ENCODE measurements at regions of chr10 and their contacts with region 1.

Region 1: GRCh38 chr10:103192451-103193106 is 493 bp downstream of the NT5C2 start:
- DNase-seq: peak; percentile 61 to 84
- ATAC-seq: peak; percentile 65 to 69
- H3K4me3 ChIP-seq: peak overlapping the region; percentile 80 to 99 (median 89)
- H3K27ac ChIP-seq: peak overlapping the region; percentile 96 to 99 (median 98)
- H3K4me1 ChIP-seq: peaks cover 63 to 65% of the 10 kb centered on the region in 2 donors
- H3K27me3 ChIP-seq: no peaks in the 10 kb centered on the region
- CTCF ChIP-seq: no peak
- POLR2A ChIP-seq: no peak

Region 2: DNA sequence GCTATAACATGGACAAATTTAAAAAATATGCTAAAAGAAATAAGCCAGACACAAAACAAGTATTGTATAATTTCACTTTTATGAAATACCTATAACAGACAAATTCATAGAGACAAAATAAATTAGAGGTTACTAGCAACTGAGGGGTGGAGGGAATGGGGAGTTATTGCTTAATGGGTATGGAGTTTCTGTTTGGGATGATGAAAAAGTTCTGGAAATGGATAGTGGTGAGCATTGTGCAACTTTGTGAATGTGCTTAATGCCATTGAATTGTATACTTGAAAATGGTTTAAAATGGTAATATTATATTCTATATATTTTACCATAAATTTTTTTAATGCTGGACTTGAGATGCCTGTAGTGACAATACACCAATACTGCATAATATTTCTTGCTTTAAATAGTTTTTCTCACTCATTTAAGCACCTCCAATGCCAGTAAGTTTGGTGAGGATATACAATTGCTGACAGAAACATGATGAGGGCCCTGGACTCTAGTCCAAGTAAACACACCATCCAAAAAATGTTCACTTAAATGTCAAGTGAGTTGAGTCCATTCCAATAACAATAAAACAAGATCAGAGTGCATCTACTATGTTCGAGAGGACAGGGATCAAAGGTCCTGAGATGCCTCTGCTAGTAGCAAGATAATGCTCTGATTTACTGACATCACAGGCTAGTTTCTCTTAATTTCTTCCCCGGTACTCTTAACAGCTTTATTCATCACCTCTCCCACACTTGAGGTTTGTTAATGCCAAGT is 71.4 kb before region 1 on chr10:
- in situ Hi-C with region 1: loop called in 1 of 4 experiments (anchors 5 kb)
- intact Hi-C with region 1: loop called (anchors 2 kb)
- DNase-seq: peak in 1 of 2 donors; percentile 42
- ATAC-seq: peak; percentile 85 to 87
- H3K4me3 ChIP-seq: peak overlapping the region in 1 of 4 donors; percentile 8
- H3K27ac ChIP-seq: peak overlapping the region; percentile 79 to 92 (median 86)
- H3K4me1 ChIP-seq: peaks cover 92 to 97% of the 10 kb centered on the region in 2 donors
- H3K27me3 ChIP-seq: no peaks in the 10 kb centered on the region
- CTCF ChIP-seq: no peak
- POLR2A ChIP-seq: no peak

Region 3: DNA sequence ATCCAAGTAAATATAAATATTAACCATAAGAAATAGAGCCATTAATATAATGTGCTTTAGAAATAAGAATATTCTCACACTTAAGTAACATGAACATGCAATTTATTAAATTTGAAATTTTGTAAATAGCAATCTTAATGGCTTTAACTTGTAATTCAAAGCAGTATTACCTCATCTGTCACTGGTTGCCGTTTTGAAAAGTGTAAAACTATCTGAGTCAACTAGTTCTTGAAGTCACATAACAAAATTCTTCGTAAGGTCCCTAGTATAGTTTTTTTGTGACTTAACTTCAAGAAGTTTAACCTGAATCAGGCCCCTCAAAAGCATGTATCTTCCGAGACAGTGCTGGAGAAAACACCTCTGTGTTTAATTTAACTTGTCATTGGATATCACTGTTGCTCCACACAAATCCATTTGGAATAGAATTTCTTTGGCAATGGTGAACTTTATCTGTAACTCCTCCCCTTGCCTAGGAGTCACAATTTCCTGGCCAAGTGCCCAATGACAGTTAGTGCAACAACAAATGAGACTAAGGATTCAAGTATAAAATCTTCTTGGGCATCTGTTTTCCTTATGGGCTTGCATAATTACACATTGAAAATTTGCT is 46.6 kb before region 1 on chr10:
- in situ Hi-C with region 1: no loop called
- intact Hi-C with region 1: loop called (anchors 2 kb)
- DNase-seq: peak; percentile 84 to 86
- ATAC-seq: peak; percentile 76 to 78
- H3K4me3 ChIP-seq: peak overlapping the region; percentile 35 to 48 (median 44)
- H3K27ac ChIP-seq: peak overlapping the region; percentile 74 to 93 (median 88)
- H3K4me1 ChIP-seq: peaks cover 47 to 85% of the 10 kb centered on the region in 2 donors
- H3K27me3 ChIP-seq: no peaks in the 10 kb centered on the region
- CTCF ChIP-seq: no peak
- POLR2A ChIP-seq: peak; percentile 8 to 69

Region 4: GRCh38 chr10:103153302-103154197 is 39.0 kb before region 1 on chr10:
- in situ Hi-C with region 1: no loop called
- intact Hi-C with region 1: loop called (anchors 2 kb)
- DNase-seq: no peak
- ATAC-seq: peak; percentile 34 to 53
- H3K4me3 ChIP-seq: peak overlapping the region; percentile 19 to 33 (median 32)
- H3K27ac ChIP-seq: peak overlapping the region; percentile 74 to 93 (median 88)
- H3K4me1 ChIP-seq: peaks cover 59 to 71% of the 10 kb centered on the region in 2 donors
- H3K27me3 ChIP-seq: no peaks in the 10 kb centered on the region
- CTCF ChIP-seq: no peak
- POLR2A ChIP-seq: no peak

Region 5: DNA sequence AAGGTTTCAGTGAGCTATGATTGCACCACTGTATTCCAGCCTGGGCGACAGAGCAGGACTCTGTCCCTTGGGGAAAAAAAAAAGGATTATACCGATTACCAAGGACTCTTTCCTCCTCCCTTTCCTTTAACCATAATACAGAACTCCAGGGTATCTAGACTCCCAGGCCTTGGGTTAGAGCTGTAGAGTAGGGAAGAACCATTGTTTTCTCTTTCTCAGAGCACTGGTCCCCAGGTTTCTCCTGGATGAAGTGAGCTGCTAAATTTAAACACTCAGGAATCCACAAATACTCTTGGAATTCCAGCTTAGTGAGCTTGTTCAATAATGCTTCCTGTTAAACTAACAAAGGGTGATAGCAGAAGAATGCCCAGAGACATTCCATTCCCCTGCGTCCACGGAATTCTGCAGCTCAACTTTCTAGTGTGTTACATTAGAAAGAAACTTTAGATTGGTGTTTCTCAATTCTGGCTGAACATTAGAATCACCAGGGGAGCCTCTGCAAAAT is 38.5 kb after region 1 on chr10:
- in situ Hi-C with region 1: no loop called
- intact Hi-C with region 1: loop called (anchors 1 kb)
- DNase-seq: peak; percentile 48 to 68
- ATAC-seq: peak; percentile 59 to 78
- H3K4me3 ChIP-seq: no peak overlapping the region
- H3K27ac ChIP-seq: peak overlapping the region; percentile 86 to 95 (median 87)
- H3K4me1 ChIP-seq: peaks cover 28 to 42% of the 10 kb centered on the region in 2 donors
- H3K27me3 ChIP-seq: no peaks in the 10 kb centered on the region
- CTCF ChIP-seq: no peak
- POLR2A ChIP-seq: no peak

Measured in gastrocnemius medialis (tissue), 4 donors.